GM12878 (cell line): ENCODE measurements at regions of chr17 and their contacts with region 1.

Region 1: GRCh38 chr17:4625181-4625617 is 16.3 kb downstream of the ALOX15 start:
- DNase-seq: no peak
- ATAC-seq: no peak
- H3K4me3 ChIP-seq: no peak overlapping the region
- H3K27ac ChIP-seq: no peak overlapping the region
- H3K4me1 ChIP-seq: no peaks in the 10 kb centered on the region
- H3K27me3 ChIP-seq: peaks cover 0 to 3% of the 10 kb centered on the region in 2 experiments; a peak in 2 of 4 replicates
- CTCF ChIP-seq: no peak
- EP300 ChIP-seq: no peak
- POLR2A ChIP-seq: no peak
- RAD21 ChIP-seq: no peak

Region 2: GRCh38 chr17:4635823-4636375 is 10.7 kb after region 1 on chr17:
- CTCF ChIA-PET with region 1: interaction called, 10 read pairs
- POLR2A ChIA-PET with region 1: no interaction called
- RAD21 ChIA-PET with region 1: no interaction called
- SMC1A ChIA-PET with region 1: interaction called, 5 read pairs
- in situ Hi-C with region 1: no loop called
- intact Hi-C with region 1: no loop called
- DNase-seq: peak; percentile 64
- ATAC-seq: peak; percentile 88
- H3K4me3 ChIP-seq: no peak overlapping the region
- H3K27ac ChIP-seq: no peak overlapping the region
- H3K4me1 ChIP-seq: peaks cover 22% of the 10 kb centered on the region
- H3K27me3 ChIP-seq: peaks cover 0 to 2% of the 10 kb centered on the region in 2 experiments; a peak in 2 of 4 replicates
- CTCF ChIP-seq: no peak
- EP300 ChIP-seq: no peak
- POLR2A ChIP-seq: no peak
- RAD21 ChIP-seq: no peak

Region 3: GRCh38 chr17:4738141-4739121 is 113.2 kb after region 1 on chr17:
- CTCF ChIA-PET with region 1: no interaction called
- POLR2A ChIA-PET with region 1: no interaction called
- RAD21 ChIA-PET with region 1: no interaction called
- SMC1A ChIA-PET with region 1: no interaction called
- in situ Hi-C with region 1: no loop called
- intact Hi-C with region 1: no loop called
- DNase-seq: no peak
- ATAC-seq: peak; percentile 11; the same call in 2 of the 3 replicates
- H3K4me3 ChIP-seq: peak overlapping the region; percentile 72
- H3K27ac ChIP-seq: no peak overlapping the region
- H3K4me1 ChIP-seq: peaks cover 8% of the 10 kb centered on the region
- H3K27me3 ChIP-seq: peaks cover 10 to 15% of the 10 kb centered on the region in 2 experiments
- CTCF ChIP-seq: no peak
- EP300 ChIP-seq: no peak
- POLR2A ChIP-seq: no peak
- RAD21 ChIP-seq: no peak